ENCODE measurements at regions of chr14 and their contacts with region 1.

Region 1: GRCh38 chr14:104723648-104724406 is at the start of gene ADSS1:
- DNase-seq: no peak
- H3K4me3 ChIP-seq: peak within 1 kb of the TSS; percentile 58
- CTCF ChIP-seq: peak; percentile 82

Region 2: DNA sequence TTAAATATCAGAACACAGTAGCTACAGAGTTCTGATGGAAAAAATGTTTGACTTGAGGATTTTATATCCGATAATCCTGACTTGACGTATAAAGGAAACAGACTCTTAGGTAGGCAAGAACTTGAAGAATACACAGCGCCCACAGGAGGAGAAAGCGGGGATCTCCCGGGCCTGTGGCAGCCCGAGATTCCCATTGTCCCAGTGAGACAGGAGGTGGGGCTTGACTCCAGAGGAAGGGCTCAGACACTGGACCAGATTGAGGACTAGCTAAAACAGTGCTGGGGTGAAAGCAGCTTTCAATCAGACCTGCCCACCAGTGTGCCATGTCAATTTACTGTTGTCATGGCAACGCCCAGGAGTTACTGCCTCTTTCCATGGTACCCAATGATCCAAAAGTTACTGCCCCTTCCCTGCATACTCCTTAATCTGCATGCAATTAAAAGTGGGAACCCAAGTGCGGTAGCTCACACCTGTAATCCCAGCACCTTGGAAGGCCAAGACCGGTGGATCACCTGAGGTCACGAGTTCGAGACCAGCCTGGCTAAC is 195.3 kb before region 1 on chr14:
- CTCF ChIA-PET with region 1: no interaction called
- POLR2A ChIA-PET with region 1: no interaction called
- DNase-seq: no peak
- H3K4me3 ChIP-seq: no peak overlapping the region
- CTCF ChIP-seq: no peak

Region 3: DNA sequence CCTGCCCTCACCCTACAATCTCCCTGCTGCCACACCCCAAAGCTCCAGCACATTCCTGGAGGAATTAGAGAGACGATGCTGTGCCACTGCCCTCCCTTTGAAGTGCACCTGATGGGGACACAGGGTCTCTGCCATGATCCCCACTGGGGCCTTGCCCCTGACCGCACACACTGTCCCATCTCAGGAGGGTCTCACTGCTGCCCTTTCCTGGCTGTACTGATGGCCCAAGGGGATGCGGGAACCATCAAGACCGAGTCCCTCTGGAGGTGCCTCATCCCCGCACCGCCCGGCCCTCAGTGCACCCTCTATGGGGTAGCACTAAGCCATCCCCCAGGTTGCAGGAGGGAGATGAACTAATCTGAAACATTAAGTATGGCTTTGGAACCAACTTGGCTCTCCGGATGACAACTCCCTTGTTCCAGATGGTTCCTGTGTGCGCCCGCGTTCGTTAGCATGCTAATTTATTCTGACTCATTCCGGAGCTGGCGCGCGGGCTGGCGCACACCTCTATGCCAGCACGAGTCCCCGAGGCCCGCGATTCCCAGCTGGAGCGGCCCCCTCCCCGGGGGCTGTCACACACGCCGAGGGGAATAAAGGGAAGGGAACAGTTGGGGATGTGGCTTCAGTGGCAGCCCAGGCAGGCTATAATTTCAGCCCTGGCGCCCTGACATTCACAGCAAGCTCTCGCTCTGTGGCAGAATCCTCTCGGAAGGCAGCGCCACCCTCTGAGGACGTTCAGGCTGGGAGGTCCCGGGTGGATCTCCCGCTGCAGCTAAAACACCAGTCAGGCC is 178.5 kb before region 1 on chr14:
- CTCF ChIA-PET with region 1: no interaction called
- POLR2A ChIA-PET with region 1: no interaction called
- DNase-seq: no peak
- H3K4me3 ChIP-seq: no peak overlapping the region
- CTCF ChIP-seq: no peak

Region 4: GRCh38 chr14:104650057-104650981 is 73.5 kb before region 1 on chr14:
- CTCF ChIA-PET with region 1: interaction called, 10 read pairs
- POLR2A ChIA-PET with region 1: interaction called, 3 read pairs
- DNase-seq: no peak
- H3K4me3 ChIP-seq: peak overlapping the region; percentile 68
- CTCF ChIP-seq: peak; percentile 100

Measured in AG04449 (cell line).